Activated naive CD4-positive, alpha-beta T cell treated with anti-CD3 and anti-CD28 coated beads for 36 hours (primary cell): ENCODE measurements at regions of chr11 and their contacts with region 1.

Region 1: DNA sequence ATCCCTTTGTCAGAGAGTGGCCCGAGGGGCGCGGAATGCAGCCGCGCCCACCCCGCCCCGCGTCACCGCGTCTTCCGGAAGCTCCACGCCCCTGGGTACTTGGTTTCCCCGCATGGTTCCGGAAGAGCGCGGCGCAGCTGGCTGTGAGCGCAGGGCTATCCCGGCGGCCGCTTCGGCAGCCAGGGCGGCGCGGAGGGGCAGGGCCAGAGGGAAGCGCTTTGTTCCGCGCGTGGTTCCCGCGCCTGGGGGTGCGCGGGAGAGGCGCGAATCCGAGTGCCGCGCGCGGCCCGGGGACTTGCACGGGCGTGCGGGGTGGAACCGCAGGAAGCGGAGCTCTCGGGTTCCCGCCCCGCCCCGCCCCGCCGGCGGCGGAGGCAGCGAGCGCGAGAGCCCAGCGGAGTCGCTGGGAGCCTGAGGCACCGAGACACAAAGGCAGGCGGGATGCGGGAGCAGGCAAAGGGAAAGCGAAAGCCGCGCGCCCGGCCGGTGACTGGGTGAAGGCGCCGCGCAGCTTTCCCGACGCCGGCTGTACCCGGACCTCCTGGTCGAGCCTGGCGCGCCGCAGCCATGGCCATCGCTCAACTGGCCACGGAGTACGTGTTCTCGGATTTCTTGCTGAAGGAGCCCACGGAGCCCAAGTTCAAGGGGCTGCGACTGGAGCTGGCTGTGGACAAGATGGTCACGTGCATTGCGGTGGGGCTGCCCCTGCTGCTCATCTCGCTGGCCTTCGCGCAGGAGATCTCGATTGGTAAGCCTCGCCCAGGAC is at the start of gene PANX1:
- DNase-seq: peak; percentile 71
- H3K4me3 Mint-ChIP-seq: no peak within 1 kb of the TSS
- H3K27ac Mint-ChIP-seq: peak within 1 kb of the TSS; percentile 88
- H3K4me1 Mint-ChIP-seq: peaks cover 21% of the 10 kb centered on the region
- H3K27me3 Mint-ChIP-seq: no peaks in the 10 kb centered on the region
- total RNA-seq, gene PANX1: 5.4 to 5.8 TPM

Region 2: GRCh38 chr11:93197380-93198214 is 931.3 kb before region 1 on chr11 and contains the start of gene SLC36A4:
- CTCF ChIA-PET with region 1: no interaction called
- intact Hi-C with region 1: loop called (anchors 1 kb)
- DNase-seq: peak; percentile 92
- H3K4me3 Mint-ChIP-seq: peak within 1 kb of the TSS; percentile 80
- H3K27ac Mint-ChIP-seq: peak within 1 kb of the TSS; percentile 94
- H3K4me1 Mint-ChIP-seq: peaks cover 14% of the 10 kb centered on the region
- H3K27me3 Mint-ChIP-seq: no peaks in the 10 kb centered on the region
- total RNA-seq, gene SLC36A4: 13.2 to 13.9 TPM

Region 3: DNA sequence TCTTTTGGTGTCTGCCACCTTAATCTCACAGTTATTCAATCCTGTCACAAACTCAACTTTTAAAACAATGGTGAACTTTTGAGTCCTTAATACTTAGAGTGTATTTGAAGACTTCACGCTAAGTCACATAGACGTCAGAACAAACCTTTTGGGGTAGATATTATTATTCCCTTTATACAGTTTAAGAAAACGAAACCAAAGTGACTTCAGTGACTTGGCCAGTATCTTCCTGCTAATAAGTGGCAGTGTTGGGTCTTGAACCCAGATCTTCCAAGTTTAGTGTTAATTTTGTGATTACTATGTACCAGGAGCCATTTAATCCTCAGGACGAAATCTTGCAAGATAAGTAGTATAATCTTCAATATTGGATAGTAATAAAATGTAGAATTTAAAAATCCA is 466.8 kb before region 1 on chr11:
- CTCF ChIA-PET with region 1: no interaction called
- intact Hi-C with region 1: loop called (anchors 1 kb)
- DNase-seq: no peak
- H3K4me3 Mint-ChIP-seq: peak overlapping the region; percentile 84
- H3K27ac Mint-ChIP-seq: peak overlapping the region; percentile 93
- H3K4me1 Mint-ChIP-seq: peaks cover 43% of the 10 kb centered on the region
- H3K27me3 Mint-ChIP-seq: no peaks in the 10 kb centered on the region

Region 4: GRCh38 chr11:94151903-94152677 is 23.2 kb after region 1 on chr11:
- CTCF ChIA-PET with region 1: interaction called, 4 read pairs
- intact Hi-C with region 1: loop called (anchors 1 kb)
- DNase-seq: peak; percentile 62
- H3K4me3 Mint-ChIP-seq: no peak overlapping the region
- H3K27ac Mint-ChIP-seq: no peak overlapping the region
- H3K4me1 Mint-ChIP-seq: peaks cover 59% of the 10 kb centered on the region
- H3K27me3 Mint-ChIP-seq: no peaks in the 10 kb centered on the region

Region 5: DNA sequence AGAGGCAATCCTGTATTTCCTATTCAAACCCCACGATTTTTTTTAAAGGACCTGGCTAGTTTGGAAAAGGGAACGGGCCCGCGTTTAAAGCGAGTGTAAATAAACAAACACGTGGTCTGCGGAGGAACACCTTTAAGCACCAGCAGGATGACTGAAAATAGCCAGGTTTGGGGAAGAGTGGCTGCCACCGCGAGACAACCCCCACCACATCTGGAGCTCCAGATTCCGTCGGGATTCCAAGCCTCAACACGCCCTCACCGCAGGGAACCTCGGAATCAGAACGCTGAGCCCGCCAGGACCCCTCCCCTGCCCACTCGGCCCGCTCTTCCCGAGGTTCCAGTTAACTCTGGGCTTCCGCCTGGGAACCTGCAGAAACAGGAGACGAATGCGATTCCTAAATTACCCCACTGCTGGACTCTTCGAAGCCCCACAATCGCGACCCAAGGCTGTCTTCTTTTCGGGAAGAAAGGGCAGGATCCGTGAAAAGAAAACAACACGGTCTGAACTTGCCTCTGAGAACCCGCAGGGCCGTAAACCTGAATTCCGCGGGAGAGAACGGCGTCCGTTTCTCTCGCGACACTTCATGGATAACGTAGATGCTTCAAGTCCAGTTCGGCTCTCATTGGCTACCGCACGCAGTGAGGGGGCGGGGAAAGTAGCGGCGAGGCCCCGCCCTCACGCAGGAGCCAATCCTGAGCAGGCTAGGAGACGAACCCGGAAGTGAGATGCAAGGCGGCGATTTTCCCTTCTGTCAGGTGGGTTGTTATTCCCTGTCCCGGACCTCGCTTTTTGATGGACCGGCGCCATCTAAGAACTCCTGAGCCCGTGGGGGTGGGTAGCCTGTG is 364.6 kb after region 1 on chr11 and contains the starts of genes ANKRD49 and MRE11:
- CTCF ChIA-PET with region 1: no interaction called
- intact Hi-C with region 1: loop called (anchors 1 kb)
- DNase-seq: peak; percentile 97
- H3K4me3 Mint-ChIP-seq: peak within 1 kb of the TSS; percentile 93
- H3K27ac Mint-ChIP-seq: peak within 1 kb of the TSS; percentile 95
- H3K4me1 Mint-ChIP-seq: peaks cover 25% of the 10 kb centered on the region
- H3K27me3 Mint-ChIP-seq: no peaks in the 10 kb centered on the region
- total RNA-seq, gene ANKRD49: 16.3 to 19.1 TPM
- total RNA-seq, gene MRE11: 33.1 to 37.3 TPM

Region 6: GRCh38 chr11:94543695-94544645 is 415.0 kb after region 1 on chr11 and contains the start of gene FUT4:
- CTCF ChIA-PET with region 1: no interaction called
- intact Hi-C with region 1: loop called (anchors 2 kb)
- DNase-seq: peak; percentile 80
- H3K4me3 Mint-ChIP-seq: peak within 1 kb of the TSS; percentile 100
- H3K27ac Mint-ChIP-seq: peak within 1 kb of the TSS; percentile 98
- H3K4me1 Mint-ChIP-seq: peaks cover 32% of the 10 kb centered on the region
- H3K27me3 Mint-ChIP-seq: no peaks in the 10 kb centered on the region
- total RNA-seq, gene FUT4: 2.8 to 2.9 TPM